ENCODE measurements at regions of chr20 and their contacts with region 1.

Region 1: DNA sequence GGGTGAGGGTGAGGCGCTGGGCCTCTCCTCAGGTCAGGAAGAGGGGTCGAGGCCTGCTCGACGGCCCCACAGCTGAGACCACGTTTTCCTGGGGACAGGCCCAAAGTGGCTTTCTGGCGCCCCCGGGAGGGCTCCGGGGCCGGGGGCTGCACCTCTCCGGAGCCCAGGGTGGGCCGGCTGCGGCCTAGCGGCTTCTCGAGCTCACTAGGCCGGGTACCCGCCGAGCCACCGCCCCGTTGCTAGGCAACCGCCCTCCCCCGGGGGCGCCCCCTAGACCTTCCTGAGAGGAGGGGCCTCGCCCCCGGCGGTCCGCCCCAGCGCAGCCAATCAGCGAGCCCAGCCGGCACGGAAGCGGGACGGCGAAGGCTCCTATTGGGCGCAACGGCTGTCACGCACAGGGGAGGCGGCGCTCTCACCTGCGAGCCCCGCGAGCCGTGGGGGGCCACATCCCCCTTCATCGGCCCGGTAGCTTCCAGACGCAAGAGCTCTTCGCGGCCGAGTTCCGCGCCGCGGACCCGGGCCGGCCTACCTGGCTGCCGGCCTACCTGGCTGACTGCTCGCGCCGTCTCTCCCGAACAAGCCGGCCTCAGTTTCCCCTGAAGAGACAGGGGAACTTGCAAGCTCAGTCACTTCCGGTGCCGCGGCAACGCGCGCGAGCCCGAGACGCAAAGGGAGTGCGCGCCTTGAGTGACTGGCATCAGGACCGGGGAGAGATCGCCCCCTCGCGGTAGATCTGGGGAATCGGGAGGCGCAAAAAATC is 831 bp upstream of the BCL2L1 start:
- DNase-seq: peak; percentile 83 to 98
- H3K4me3 ChIP-seq: peak overlapping the region; percentile 71 to 82
- H3K27ac ChIP-seq: peak overlapping the region; percentile 95 to 98
- H3K4me1 ChIP-seq: peaks cover 0 to 10% of the 10 kb centered on the region in 2 donors
- H3K27me3 ChIP-seq: no peaks in the 10 kb centered on the region
- CTCF ChIP-seq: peak; percentile 91 to 96 (median 91)

Region 2: GRCh38 chr20:31560094-31560899 is 163.2 kb before region 1 on chr20:
- intact Hi-C with region 1: loop called (anchors 2 kb)
- DNase-seq: peak; percentile 35 to 89
- H3K4me3 ChIP-seq: no peak overlapping the region
- H3K27ac ChIP-seq: peak overlapping the region; percentile 78 to 92
- H3K4me1 ChIP-seq: peaks cover 10 to 23% of the 10 kb centered on the region in 2 donors
- H3K27me3 ChIP-seq: no peaks in the 10 kb centered on the region
- CTCF ChIP-seq: peak; percentile 83 to 84 (median 83)

Region 3: GRCh38 chr20:31661625-31662371 is 61.7 kb before region 1 on chr20:
- intact Hi-C with region 1: loop called (anchors 1 kb)
- DNase-seq: peak in 1 of 2 donors; percentile 88
- H3K4me3 ChIP-seq: peak overlapping the region; percentile 42 to 62
- H3K27ac ChIP-seq: peak overlapping the region; percentile 68 to 83
- H3K4me1 ChIP-seq: peaks cover 9 to 33% of the 10 kb centered on the region in 2 donors
- H3K27me3 ChIP-seq: no peaks in the 10 kb centered on the region
- CTCF ChIP-seq: peak; percentile 80 to 82 (median 82)

Region 4: GRCh38 chr20:31670371-31671228 is 52.9 kb before region 1 on chr20:
- intact Hi-C with region 1: loop called (anchors 2 kb)
- DNase-seq: peak in 1 of 2 donors; percentile 89
- H3K4me3 ChIP-seq: peak overlapping the region in 1 of 2 donors; percentile 30
- H3K27ac ChIP-seq: peak overlapping the region; percentile 89 to 95
- H3K4me1 ChIP-seq: peaks cover 36 to 98% of the 10 kb centered on the region in 2 donors
- H3K27me3 ChIP-seq: no peaks in the 10 kb centered on the region
- CTCF ChIP-seq: no peak

Region 5: GRCh38 chr20:31698803-31699718 is 24.4 kb before region 1 on chr20:
- intact Hi-C with region 1: loop called (anchors 2 kb)
- DNase-seq: peak; percentile 69 to 91
- H3K4me3 ChIP-seq: no peak overlapping the region
- H3K27ac ChIP-seq: peak overlapping the region; percentile 86 to 96
- H3K4me1 ChIP-seq: peaks cover 19 to 61% of the 10 kb centered on the region in 2 donors
- H3K27me3 ChIP-seq: no peaks in the 10 kb centered on the region
- CTCF ChIP-seq: no peak

Region 6: DNA sequence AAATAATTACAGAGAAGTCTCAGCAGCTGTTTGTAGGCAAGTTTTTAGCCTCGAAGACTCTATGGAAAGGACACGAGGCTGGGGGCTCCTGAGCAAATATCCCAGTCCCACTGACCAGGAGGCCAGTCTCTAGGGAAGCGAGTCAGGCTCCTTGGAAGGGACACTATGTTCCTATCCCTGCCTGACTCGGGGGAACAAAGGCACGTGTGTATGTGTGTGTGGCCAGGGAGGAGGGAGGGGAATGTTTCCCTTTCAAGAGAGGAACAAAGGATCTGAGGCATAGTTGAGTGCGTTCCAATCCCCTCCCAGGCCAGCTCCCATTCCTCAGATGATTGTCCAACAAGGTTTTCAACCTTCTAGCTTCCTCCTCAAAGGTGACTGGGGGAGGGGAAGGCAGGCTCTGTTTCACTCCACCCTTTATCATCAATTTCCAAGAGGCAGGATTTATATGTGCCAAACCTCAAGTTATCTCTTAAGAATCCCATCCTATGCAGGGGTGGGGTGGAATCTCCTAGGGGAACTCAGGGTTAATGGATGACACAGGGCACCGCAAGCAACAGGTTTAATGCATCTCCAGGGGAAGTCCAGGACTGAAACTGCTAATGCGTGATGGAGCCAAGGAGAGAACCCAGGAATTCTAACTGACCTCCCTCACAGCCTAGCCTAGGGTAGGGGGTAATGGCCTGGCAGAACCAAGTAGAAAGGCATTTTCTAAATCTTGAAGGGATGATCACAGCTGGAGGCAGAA is 10.8 kb before region 1 on chr20:
- intact Hi-C with region 1: loop called (anchors 1 kb)
- DNase-seq: peak; percentile 87 to 98
- H3K4me3 ChIP-seq: peak overlapping the region; percentile 18 to 53
- H3K27ac ChIP-seq: peak overlapping the region; percentile 95 to 98
- H3K4me1 ChIP-seq: peaks cover 28 to 81% of the 10 kb centered on the region in 2 donors
- H3K27me3 ChIP-seq: no peaks in the 10 kb centered on the region
- CTCF ChIP-seq: no peak

Region 7: DNA sequence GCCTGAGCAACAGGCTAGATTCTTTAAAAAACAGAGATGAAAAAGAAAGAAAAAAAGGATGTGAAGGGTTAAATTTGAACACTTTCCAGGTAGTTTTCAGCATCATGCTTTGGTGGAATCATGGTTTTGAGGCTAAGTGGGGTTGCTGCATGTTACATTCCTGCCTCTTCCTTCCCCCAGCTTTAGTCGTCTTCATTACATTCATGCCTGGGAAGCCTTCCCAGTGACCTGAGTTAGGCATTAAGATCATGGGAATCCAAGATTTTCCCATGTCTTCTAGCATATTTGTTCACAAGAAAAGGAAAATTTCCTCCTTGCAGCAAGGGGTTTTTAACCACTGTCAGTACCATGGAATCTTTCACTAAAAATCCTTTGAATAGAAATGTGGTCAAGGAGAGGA is 27.6 kb after region 1 on chr20:
- intact Hi-C with region 1: no loop called
- DNase-seq: no peak
- H3K4me3 ChIP-seq: no peak overlapping the region
- H3K27ac ChIP-seq: no peak overlapping the region
- H3K4me1 ChIP-seq: no peaks in the 10 kb centered on the region
- H3K27me3 ChIP-seq: no peaks in the 10 kb centered on the region
- CTCF ChIP-seq: no peak

Region 8: GRCh38 chr20:31842471-31843157 is 119.1 kb after region 1 on chr20:
- intact Hi-C with region 1: loop called (anchors 10 kb)
- DNase-seq: peak in 1 of 2 donors; percentile 76
- H3K4me3 ChIP-seq: peak overlapping the region; percentile 52 to 70
- H3K27ac ChIP-seq: peak overlapping the region; percentile 94 to 95
- H3K4me1 ChIP-seq: peaks cover 39 to 61% of the 10 kb centered on the region in 2 donors
- H3K27me3 ChIP-seq: no peaks in the 10 kb centered on the region
- CTCF ChIP-seq: no peak